CD8-positive, alpha-beta T cell (primary cell): ENCODE measurements at regions of chr6 and their contacts with region 1.

Region 1: GRCh38 chr6:108558372-108559096 is 2.2 kb upstream of the FOXO3 start:
- DNase-seq: peak; percentile 92 to 100 (median 96)
- ATAC-seq: peak; percentile 68
- H3K4me3 ChIP-seq: peak overlapping the region; percentile 92 to 97
- H3K4me3 Mint-ChIP-seq: peak overlapping the region; percentile 97
- H3K27ac ChIP-seq: peak overlapping the region; percentile 87 to 99
- H3K27ac Mint-ChIP-seq: peak overlapping the region; percentile 99
- H3K4me1 ChIP-seq: peaks cover 16% of the 10 kb centered on the region
- H3K4me1 Mint-ChIP-seq: peaks cover 24% of the 10 kb centered on the region
- H3K27me3 ChIP-seq: no peaks in the 10 kb centered on the region
- H3K27me3 Mint-ChIP-seq: peaks cover 2% of the 10 kb centered on the region
- CTCF ChIP-seq: no peak

Region 2: GRCh38 chr6:107820338-107821261 is 737.9 kb before region 1 on chr6:
- CTCF ChIA-PET with region 1: no interaction called
- POLR2A ChIA-PET with region 1: no interaction called
- intact Hi-C with region 1: loop called in 1 of 2 experiments (anchors 5 kb)
- DNase-seq: peak; percentile 15 to 78 (median 54)
- ATAC-seq: no peak
- H3K4me3 ChIP-seq: peak overlapping the region; percentile 72 to 92
- H3K4me3 Mint-ChIP-seq: peak overlapping the region; percentile 92
- H3K27ac ChIP-seq: peak overlapping the region; percentile 81 to 90
- H3K27ac Mint-ChIP-seq: peak overlapping the region; percentile 96
- H3K4me1 ChIP-seq: peaks cover 65% of the 10 kb centered on the region
- H3K4me1 Mint-ChIP-seq: peaks cover 82% of the 10 kb centered on the region
- H3K27me3 ChIP-seq: no peaks in the 10 kb centered on the region
- H3K27me3 Mint-ChIP-seq: no peaks in the 10 kb centered on the region
- CTCF ChIP-seq: no peak

Region 3: DNA sequence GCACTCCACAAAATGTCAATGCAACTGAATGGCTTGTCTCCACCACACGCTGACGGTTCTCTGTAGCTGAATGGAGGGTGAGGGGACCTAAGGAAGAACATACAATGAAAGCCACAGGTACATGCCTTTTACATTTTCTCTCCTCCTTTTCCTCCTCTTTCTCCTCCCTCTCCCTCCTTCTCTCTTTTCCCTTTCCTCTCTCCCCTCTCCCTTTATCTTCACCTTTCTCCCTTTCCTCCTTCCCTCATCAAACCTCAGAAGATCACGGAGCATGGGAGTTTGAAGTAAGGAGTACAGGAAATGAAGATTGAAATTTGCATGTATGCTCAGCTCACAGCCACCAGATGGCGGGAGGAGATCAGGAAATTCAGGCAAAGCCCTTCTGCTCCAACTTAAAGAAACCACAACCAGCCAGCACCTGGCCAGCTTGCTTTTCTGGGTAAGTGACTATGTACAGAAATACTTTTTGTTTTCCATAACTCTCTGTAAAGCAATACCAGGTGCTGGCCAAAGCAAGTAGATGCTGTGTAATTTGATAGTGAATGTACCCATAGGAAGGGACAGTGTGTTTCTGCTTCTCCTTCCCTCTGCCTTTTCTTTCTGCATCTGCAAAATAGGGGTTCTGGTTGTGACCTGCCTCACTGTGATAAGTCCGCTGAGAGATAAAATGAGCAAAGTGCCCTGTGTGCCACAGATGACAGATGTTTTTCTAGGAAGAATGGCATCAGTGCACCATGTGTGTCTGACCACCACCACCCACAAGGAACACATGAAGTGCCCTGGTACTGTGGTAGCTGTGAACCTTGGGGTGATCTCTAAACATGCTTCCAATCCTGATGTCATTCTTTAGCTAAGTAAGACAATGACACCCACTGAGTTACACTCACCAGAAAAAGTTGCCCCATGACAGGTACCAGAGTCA is 16.4 kb before region 1 on chr6:
- CTCF ChIA-PET with region 1: interaction called, 20 read pairs
- POLR2A ChIA-PET with region 1: interaction called, 7 read pairs
- intact Hi-C with region 1: loop called in 1 of 2 experiments (anchors 1 kb)
- DNase-seq: peak; percentile 39 to 87 (median 69)
- ATAC-seq: peak; percentile 92
- H3K4me3 ChIP-seq: no peak overlapping the region
- H3K4me3 Mint-ChIP-seq: no peak overlapping the region
- H3K27ac ChIP-seq: no peak overlapping the region
- H3K27ac Mint-ChIP-seq: no peak overlapping the region
- H3K4me1 ChIP-seq: peaks cover 12% of the 10 kb centered on the region
- H3K4me1 Mint-ChIP-seq: peaks cover 16% of the 10 kb centered on the region
- H3K27me3 ChIP-seq: no peaks in the 10 kb centered on the region
- H3K27me3 Mint-ChIP-seq: no peaks in the 10 kb centered on the region
- CTCF ChIP-seq: peak; percentile 95

Region 4: DNA sequence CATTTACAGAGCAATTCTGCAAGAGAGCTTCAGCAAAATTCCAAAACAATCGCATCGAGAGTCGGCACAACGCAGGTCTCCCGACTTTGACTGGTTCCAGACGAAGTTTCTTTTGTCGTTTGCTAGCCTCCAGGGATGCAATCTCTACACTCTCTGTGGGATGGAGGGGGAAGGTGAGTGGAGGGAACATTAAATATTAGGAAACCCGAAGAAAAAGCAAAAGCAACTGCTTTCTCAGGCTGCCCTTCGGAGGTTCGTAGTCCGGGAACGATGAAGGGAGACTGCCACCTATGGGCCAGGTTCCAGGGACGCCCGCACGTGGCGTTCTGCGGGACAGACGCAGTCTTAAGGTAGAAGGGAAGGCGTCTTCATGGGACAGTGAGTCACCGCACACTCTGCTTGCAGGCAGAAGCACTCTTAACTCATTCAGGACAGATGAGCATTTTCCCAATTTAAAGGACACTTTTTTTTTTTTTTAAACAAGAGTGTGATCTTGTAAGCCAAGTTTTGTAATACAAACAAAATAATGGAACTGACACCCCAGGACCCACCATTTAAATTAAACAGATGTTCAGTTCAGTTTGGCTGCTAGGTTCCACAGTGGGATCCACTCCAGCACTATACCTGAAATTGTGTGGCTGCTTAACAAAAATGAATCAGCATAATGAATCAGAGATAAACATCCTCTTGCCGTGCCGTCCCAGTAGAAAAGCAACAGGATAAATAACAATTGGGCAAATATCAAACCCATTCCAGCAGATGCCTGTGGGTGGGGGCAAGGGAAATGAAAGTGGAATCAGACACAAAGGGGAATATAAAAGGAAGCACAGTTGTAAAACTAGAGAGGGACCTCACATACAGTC is 223.9 kb after region 1 on chr6:
- CTCF ChIA-PET with region 1: interaction called, 4 read pairs
- POLR2A ChIA-PET with region 1: no interaction called
- intact Hi-C with region 1: loop called in 1 of 2 experiments (anchors 5 kb)
- DNase-seq: peak; percentile 55 to 86 (median 78)
- ATAC-seq: peak; percentile 100
- H3K4me3 ChIP-seq: peak overlapping the region; percentile 56
- H3K4me3 Mint-ChIP-seq: peak overlapping the region; percentile 85
- H3K27ac ChIP-seq: no peak overlapping the region
- H3K27ac Mint-ChIP-seq: no peak overlapping the region
- H3K4me1 ChIP-seq: peaks cover 6% of the 10 kb centered on the region
- H3K4me1 Mint-ChIP-seq: peaks cover 8% of the 10 kb centered on the region
- H3K27me3 ChIP-seq: no peaks in the 10 kb centered on the region
- H3K27me3 Mint-ChIP-seq: no peaks in the 10 kb centered on the region
- CTCF ChIP-seq: peak; percentile 69

Region 5: GRCh38 chr6:109073344-109074132 is 515.0 kb after region 1 on chr6:
- CTCF ChIA-PET with region 1: interaction called, 22 read pairs
- POLR2A ChIA-PET with region 1: interaction called, 8 read pairs
- intact Hi-C with region 1: loop called in 1 of 2 experiments (anchors 5 kb)
- DNase-seq: peak in 8 of 9 experiments; percentile 8 to 87 (median 50)
- ATAC-seq: peak; percentile 69
- H3K4me3 ChIP-seq: no peak overlapping the region
- H3K4me3 Mint-ChIP-seq: no peak overlapping the region
- H3K27ac ChIP-seq: no peak overlapping the region
- H3K27ac Mint-ChIP-seq: no peak overlapping the region
- H3K4me1 ChIP-seq: peaks cover 23% of the 10 kb centered on the region
- H3K4me1 Mint-ChIP-seq: peaks cover 33% of the 10 kb centered on the region
- H3K27me3 ChIP-seq: no peaks in the 10 kb centered on the region
- H3K27me3 Mint-ChIP-seq: no peaks in the 10 kb centered on the region
- CTCF ChIP-seq: peak; percentile 91

Region 6: GRCh38 chr6:109482905-109483735 is 924.6 kb after region 1 on chr6 and contains the start of gene ZBTB24:
- CTCF ChIA-PET with region 1: no interaction called
- POLR2A ChIA-PET with region 1: no interaction called
- intact Hi-C with region 1: loop called (anchors 2 to 10 kb)
- DNase-seq: peak; percentile 75 to 96 (median 88)
- ATAC-seq: peak; percentile 85
- H3K4me3 ChIP-seq: peak within 1 kb of the TSS; percentile 65 to 69
- H3K4me3 Mint-ChIP-seq: peak within 1 kb of the TSS; percentile 95
- H3K27ac ChIP-seq: peak within 1 kb of the TSS; percentile 49 to 62
- H3K27ac Mint-ChIP-seq: peak within 1 kb of the TSS; percentile 89
- H3K4me1 ChIP-seq: peaks cover 37% of the 10 kb centered on the region
- H3K4me1 Mint-ChIP-seq: peaks cover 50% of the 10 kb centered on the region
- H3K27me3 ChIP-seq: no peaks in the 10 kb centered on the region
- H3K27me3 Mint-ChIP-seq: no peaks in the 10 kb centered on the region
- CTCF ChIP-seq: no peak
- total RNA-seq, gene ZBTB24: 10.9 to 11.2 TPM

Region 7: DNA sequence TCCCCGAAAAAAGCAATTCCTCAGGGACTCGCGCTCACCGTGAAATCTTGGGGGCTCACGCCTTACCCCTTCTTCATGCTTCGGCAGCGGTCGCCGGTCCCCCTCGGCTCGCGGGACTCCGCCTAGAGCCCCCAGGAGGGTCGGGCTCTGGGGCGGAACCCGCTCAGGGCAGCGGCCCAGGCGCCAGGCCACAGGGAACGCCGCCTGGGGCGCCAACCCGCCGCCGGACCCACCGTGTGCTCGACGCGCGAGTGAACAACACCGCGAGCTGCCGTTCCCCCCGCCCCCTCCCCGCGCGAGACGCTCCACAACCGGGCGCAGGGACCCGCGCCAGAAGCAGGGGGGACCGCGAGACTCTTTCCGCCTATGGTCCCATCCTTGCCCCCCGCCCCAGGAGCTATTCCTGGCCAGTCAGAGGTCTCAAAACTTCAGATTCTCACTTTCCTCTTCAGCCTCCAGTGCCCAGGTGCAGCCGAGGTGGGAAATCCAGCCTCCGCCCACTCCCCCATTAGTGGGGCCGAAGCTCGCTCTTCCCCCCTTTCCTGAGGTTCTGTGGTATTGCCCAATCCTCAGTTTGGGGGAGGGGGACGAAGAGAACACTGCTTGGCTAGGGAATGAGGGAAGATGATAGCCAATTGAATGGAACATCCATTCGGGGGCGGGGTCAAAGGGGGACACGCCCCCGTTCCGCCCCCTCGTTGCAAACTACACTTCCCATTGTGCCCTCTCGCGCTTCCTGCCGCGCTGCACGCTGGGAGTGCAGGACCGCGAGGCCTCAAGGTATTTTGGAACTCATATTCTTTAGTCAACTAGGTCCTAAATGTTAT is 1621.1 kb after region 1 on chr6 and contains the start of gene WASF1:
- CTCF ChIA-PET with region 1: no interaction called
- POLR2A ChIA-PET with region 1: no interaction called
- intact Hi-C with region 1: loop called in 1 of 2 experiments (anchors 10 kb)
- DNase-seq: peak; percentile 77 to 95 (median 89)
- ATAC-seq: peak; percentile 84
- H3K4me3 ChIP-seq: peak within 1 kb of the TSS; percentile 83 to 96
- H3K4me3 Mint-ChIP-seq: peak within 1 kb of the TSS; percentile 77
- H3K27ac ChIP-seq: peak within 1 kb of the TSS; percentile 72 to 79
- H3K27ac Mint-ChIP-seq: peak within 1 kb of the TSS; percentile 38
- H3K4me1 ChIP-seq: peaks cover 28% of the 10 kb centered on the region
- H3K4me1 Mint-ChIP-seq: peaks cover 7% of the 10 kb centered on the region
- H3K27me3 ChIP-seq: no peaks in the 10 kb centered on the region
- H3K27me3 Mint-ChIP-seq: peaks cover 9% of the 10 kb centered on the region
- CTCF ChIP-seq: no peak
- total RNA-seq, gene WASF1: 1.1 to 1.7 TPM